ENCODE measurements at regions of chr3 and their contacts with region 1.

Region 1: DNA sequence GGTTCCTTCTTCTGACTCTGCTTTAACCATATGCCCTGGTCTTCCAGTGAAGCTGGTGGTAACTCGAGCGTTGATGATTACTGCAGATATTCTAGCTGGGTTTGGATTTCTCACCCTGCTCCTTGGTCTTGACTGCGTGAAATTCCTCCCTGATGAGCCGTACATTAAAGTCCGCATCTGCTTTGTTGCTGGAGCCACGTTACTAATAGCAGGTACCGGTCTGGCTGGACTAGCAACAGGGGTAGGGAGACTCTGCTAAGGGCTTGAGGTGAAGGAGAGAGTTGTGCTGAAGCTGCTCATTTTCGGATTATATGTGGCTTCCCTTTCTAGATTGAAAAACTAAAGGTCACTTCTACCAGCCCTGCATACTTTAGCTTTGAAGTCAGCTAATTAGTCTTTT is 16.8 kb downstream of the CLDN16 start:
- DNase-seq: no peak
- ATAC-seq: no peak
- H3K4me3 ChIP-seq: no peak overlapping the region
- H3K4me3 Mint-ChIP-seq: no peak overlapping the region
- H3K27ac ChIP-seq: no peak overlapping the region
- H3K27ac Mint-ChIP-seq: no peak overlapping the region
- H3K4me1 ChIP-seq: no peaks in the 10 kb centered on the region
- H3K4me1 Mint-ChIP-seq: no peaks in the 10 kb centered on the region
- H3K27me3 ChIP-seq: no peaks in the 10 kb centered on the region
- H3K27me3 Mint-ChIP-seq: no peaks in the 10 kb centered on the region
- CTCF ChIP-seq: no peak

Region 2: DNA sequence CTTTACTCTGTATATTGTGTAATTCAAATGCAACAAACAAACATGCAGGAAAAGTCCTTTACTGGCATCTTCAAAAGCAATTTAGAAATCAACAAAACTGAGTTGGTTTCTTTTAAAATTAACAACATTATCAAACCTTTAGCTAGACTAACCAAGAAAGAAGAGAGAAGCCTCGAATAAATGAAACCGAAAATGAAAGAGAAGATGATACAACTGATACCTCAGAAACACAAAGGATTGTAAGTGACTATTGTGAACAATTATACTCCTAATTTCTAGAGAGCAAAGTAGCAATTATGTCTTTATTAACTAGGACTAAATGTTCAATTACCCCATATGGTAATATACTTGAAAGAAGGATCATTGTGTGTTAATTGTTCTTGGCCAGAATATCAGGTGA is 234.8 kb before region 1 on chr3:
- CTCF ChIA-PET with region 1: no interaction called
- POLR2A ChIA-PET with region 1: no interaction called
- intact Hi-C with region 1: no loop called
- DNase-seq: no peak
- ATAC-seq: no peak
- H3K4me3 ChIP-seq: no peak overlapping the region
- H3K4me3 Mint-ChIP-seq: no peak overlapping the region
- H3K27ac ChIP-seq: no peak overlapping the region
- H3K27ac Mint-ChIP-seq: no peak overlapping the region
- H3K4me1 ChIP-seq: peaks cover 0 to 2% of the 10 kb centered on the region in 2 donors
- H3K4me1 Mint-ChIP-seq: peaks cover 8% of the 10 kb centered on the region
- H3K27me3 ChIP-seq: no peaks in the 10 kb centered on the region
- H3K27me3 Mint-ChIP-seq: peaks cover 3% of the 10 kb centered on the region
- CTCF ChIP-seq: no peak

Region 3: DNA sequence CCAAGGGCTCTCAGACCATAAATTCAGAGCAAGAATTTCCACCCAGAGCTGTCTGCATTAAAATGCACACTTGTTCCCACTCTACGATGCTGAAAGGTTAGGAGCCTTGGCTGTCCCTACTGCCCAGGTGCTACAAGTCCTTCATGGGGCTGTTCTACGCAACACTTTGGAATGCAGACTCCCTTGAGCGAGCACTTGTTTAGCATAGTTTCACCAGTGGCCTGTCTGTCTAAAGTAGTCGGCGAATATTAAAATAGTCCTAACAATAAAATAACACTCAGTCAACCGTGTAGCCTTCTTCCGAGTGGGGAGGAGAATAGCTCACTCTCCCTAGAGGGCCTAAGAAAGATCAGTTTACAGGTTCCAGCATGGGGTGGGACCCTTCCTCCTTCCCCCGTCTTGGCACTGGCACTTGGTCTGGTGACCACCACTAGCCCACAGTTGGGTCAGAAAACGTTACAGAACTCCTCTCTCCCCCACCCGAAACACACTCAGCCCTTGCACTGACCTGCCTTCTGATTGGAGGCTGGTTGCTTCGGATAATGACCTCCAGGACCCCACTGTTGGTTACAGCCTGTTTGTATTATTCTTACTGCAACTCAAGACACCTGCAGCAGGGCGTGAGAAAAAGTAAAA is 17.0 kb before region 1 on chr3 and contains the start of gene CLDN16:
- CTCF ChIA-PET with region 1: no interaction called
- POLR2A ChIA-PET with region 1: no interaction called
- intact Hi-C with region 1: no loop called
- DNase-seq: no peak
- ATAC-seq: no peak
- H3K4me3 ChIP-seq: no peak within 1 kb of the TSS
- H3K4me3 Mint-ChIP-seq: no peak within 1 kb of the TSS
- H3K27ac ChIP-seq: no peak within 1 kb of the TSS
- H3K27ac Mint-ChIP-seq: no peak within 1 kb of the TSS
- H3K4me1 ChIP-seq: no peaks in the 10 kb centered on the region
- H3K4me1 Mint-ChIP-seq: no peaks in the 10 kb centered on the region
- H3K27me3 ChIP-seq: no peaks in the 10 kb centered on the region
- H3K27me3 Mint-ChIP-seq: peaks cover 4% of the 10 kb centered on the region
- CTCF ChIP-seq: no peak
- total RNA-seq, gene CLDN16: not detected in 2 replicates

Region 4: DNA sequence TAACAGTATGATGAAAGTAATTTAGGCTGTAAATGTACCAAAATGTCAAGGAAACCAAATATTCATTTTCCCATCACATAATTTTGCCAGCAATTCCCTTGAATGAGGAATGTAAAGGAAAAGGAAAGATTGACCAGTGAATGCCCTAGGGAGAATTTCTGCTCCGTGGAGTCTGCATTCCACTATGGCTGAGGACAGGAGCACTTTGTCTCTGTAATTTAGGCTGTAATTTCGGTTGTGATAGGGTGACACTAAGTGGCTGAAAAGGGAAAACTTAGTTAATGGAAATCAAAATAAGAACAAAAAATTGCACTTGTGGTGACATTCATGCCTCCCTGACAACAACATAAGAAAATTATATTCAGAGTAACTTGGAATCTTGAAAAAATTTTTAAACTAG is 53.3 kb after region 1 on chr3:
- CTCF ChIA-PET with region 1: no interaction called
- POLR2A ChIA-PET with region 1: no interaction called
- intact Hi-C with region 1: loop called (anchors 1 kb)
- DNase-seq: no peak
- ATAC-seq: no peak
- H3K4me3 ChIP-seq: no peak overlapping the region
- H3K4me3 Mint-ChIP-seq: no peak overlapping the region
- H3K27ac ChIP-seq: no peak overlapping the region
- H3K27ac Mint-ChIP-seq: no peak overlapping the region
- H3K4me1 ChIP-seq: no peaks in the 10 kb centered on the region
- H3K4me1 Mint-ChIP-seq: no peaks in the 10 kb centered on the region
- H3K27me3 ChIP-seq: peaks cover 0 to 6% (median 2%) of the 10 kb centered on the region in 4 experiments
- H3K27me3 Mint-ChIP-seq: peaks cover 9% of the 10 kb centered on the region
- CTCF ChIP-seq: no peak